ENCODE measurements at regions of chr13 and their contacts with region 1.

Region 1: GRCh38 chr13:41411522-41411921 is 45.8 kb upstream of the RGCC start:
- DNase-seq: no peak
- H3K4me3 ChIP-seq: no peak overlapping the region
- H3K27ac ChIP-seq: no peak overlapping the region
- H3K4me1 ChIP-seq: no peaks in the 10 kb centered on the region
- H3K27me3 ChIP-seq: no peaks in the 10 kb centered on the region
- CTCF ChIP-seq: no peak
- EP300 ChIP-seq: no peak
- POLR2A ChIP-seq: no peak

Region 2: GRCh38 chr13:41099986-41100385 is 311.5 kb before region 1 on chr13:
- in situ Hi-C with region 1: no loop called
- intact Hi-C with region 1: no loop called
- DNase-seq: no peak
- H3K4me3 ChIP-seq: no peak overlapping the region
- H3K27ac ChIP-seq: no peak overlapping the region
- H3K4me1 ChIP-seq: no peaks in the 10 kb centered on the region
- H3K27me3 ChIP-seq: no peaks in the 10 kb centered on the region
- CTCF ChIP-seq: no peak
- EP300 ChIP-seq: no peak
- POLR2A ChIP-seq: no peak

Region 3: DNA sequence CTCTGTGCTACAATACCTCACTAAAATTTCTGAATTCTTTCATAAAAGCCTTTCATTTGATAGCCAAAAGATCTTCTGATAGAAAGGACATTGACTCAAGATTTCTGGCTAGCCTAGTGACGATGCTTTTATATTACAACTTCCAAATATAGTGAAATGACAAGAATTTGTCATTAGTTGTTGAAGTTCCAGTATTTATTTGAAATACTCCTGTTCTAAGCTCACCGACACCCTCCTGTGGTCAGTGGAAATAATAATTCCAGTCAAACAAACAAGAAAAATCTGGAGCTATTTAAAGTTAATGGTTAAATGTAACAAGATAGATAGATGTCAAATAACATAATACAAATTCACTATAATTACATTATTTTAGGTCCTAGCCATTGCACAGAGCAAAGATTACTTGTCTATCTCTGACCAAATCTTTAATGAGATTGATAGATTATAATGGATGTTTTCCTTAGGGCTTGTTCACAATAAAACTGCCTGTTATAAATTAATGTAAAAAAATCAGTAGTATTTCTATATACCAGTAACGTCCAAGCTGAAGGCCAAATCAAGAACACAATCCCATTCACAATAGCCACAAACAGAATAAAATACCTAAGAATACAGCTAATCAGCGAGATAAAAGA is 241.3 kb after region 1 on chr13:
- in situ Hi-C with region 1: loop called in 2 of 4 experiments (anchors 25 kb)
- intact Hi-C with region 1: no loop called
- DNase-seq: no peak
- H3K4me3 ChIP-seq: no peak overlapping the region
- H3K27ac ChIP-seq: no peak overlapping the region
- H3K4me1 ChIP-seq: peaks cover 4 to 14% (median 10%) of the 10 kb centered on the region in 4 donors
- H3K27me3 ChIP-seq: no peaks in the 10 kb centered on the region
- CTCF ChIP-seq: peak; percentile 42 to 65 (median 45)
- EP300 ChIP-seq: no peak
- POLR2A ChIP-seq: no peak

Region 4: DNA sequence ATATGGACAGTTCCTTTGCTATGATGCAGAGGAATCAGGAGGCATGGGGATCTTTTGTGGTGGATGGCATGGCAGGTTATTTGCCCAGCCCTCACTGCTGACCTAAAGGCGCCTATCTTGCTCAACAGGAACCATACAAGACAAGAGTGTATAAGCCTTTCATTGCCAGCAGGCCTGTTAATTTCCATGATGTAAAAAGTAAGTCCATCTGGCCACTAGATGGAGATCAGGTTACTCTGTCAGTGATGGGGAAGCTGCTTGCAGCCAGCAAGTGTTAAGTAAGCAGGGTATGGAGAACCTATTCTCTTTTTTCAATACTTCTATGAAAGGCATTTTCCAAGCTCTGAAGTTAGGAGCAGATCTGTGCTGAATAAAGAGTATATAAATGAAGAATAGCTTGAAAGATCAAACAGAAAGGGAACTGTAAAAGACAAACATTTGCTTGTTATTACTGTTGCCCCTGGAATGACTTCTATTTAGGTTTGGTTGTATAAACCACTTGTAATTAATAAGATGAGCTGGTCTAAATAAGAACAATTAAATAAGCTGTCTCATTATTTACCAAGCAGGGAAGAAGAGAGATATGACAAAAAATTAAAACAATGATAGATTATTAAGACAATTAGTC is 256.7 kb after region 1 on chr13:
- in situ Hi-C with region 1: loop called in 1 of 4 experiments (anchors 25 kb)
- intact Hi-C with region 1: no loop called
- DNase-seq: peak; percentile 28
- H3K4me3 ChIP-seq: no peak overlapping the region
- H3K27ac ChIP-seq: no peak overlapping the region
- H3K4me1 ChIP-seq: no peaks in the 10 kb centered on the region
- H3K27me3 ChIP-seq: no peaks in the 10 kb centered on the region
- CTCF ChIP-seq: peak; percentile 67 to 83 (median 72)
- EP300 ChIP-seq: no peak
- POLR2A ChIP-seq: no peak

Region 5: DNA sequence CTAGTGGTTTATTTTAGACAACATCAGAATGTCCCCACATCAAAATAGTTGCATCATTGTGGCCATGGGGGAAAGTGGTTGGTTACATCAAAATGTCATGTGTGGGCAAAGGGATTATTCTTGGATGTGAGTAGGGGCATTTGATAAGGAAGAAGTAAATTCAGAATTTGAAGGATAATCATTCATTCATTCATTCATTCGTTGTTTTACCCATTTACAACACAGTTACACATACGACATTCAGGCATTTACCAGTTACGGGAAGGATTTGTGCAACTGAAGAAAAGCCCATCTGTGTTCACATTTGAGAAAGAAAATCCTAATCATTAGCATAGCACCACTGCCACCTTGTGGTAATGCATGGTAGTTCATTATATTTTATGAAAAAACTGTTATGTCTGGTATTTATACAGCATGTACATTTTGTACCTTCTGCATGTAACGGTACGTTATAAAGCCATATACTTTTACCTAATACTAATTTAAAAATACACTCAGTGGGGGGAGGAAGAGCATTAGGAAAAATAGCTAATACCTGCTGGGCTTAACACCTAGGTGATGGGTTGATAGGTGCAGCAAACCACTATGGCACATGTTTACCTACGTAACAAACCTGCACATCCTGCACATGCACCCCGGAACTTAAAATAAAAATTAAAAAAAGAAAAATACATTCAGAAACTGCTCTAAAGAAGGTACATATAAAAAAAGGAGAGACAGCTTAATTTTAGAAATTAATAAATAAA is 699.1 kb after region 1 on chr13:
- in situ Hi-C with region 1: loop called in 1 of 4 experiments (anchors 25 kb)
- intact Hi-C with region 1: no loop called
- DNase-seq: no peak
- H3K4me3 ChIP-seq: no peak overlapping the region
- H3K27ac ChIP-seq: no peak overlapping the region
- H3K4me1 ChIP-seq: no peaks in the 10 kb centered on the region
- H3K27me3 ChIP-seq: no peaks in the 10 kb centered on the region
- CTCF ChIP-seq: peak; percentile 82 to 86 (median 85)
- EP300 ChIP-seq: no peak
- POLR2A ChIP-seq: no peak

Region 6: DNA sequence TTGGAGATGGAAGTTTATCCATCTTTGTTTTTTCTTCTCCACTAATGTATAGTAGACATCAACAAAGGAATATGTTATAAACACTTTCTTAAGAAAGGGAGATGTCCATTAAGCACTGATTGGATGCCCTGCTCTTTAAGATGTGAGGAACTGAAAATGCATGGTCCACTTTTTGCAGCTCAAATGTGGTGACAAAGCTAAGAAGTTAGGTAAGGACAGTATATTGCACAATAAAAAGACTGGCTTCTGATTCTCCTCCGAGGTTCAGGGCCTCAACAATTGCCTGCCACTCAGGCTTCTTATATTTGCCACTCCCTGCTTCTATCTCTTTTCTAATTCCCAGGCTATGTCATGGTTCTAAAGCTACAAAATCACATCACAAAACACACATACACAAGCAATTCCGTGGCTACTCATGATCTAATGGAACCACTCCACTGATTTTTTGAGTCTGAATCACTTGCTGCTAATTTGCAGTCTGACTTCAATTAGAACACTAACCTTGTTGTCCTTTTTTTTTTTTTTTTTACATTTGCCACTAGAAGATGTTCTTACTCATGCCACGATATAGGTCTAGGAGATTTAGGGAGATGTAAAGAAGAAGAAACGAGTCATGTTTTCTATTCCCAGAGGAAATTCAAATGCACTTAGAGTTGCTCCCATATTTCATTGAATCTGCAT is 1132.9 kb after region 1 on chr13:
- in situ Hi-C with region 1: no loop called
- intact Hi-C with region 1: no loop called
- DNase-seq: no peak
- H3K4me3 ChIP-seq: no peak overlapping the region
- H3K27ac ChIP-seq: no peak overlapping the region
- H3K4me1 ChIP-seq: peaks cover 0 to 3% (median 1%) of the 10 kb centered on the region in 4 donors
- H3K27me3 ChIP-seq: no peaks in the 10 kb centered on the region
- CTCF ChIP-seq: no peak
- EP300 ChIP-seq: no peak
- POLR2A ChIP-seq: no peak

Measured in transverse colon (tissue), 4 donors.